ENCODE measurements at regions of chrX and their contacts with region 1.

Region 1: DNA sequence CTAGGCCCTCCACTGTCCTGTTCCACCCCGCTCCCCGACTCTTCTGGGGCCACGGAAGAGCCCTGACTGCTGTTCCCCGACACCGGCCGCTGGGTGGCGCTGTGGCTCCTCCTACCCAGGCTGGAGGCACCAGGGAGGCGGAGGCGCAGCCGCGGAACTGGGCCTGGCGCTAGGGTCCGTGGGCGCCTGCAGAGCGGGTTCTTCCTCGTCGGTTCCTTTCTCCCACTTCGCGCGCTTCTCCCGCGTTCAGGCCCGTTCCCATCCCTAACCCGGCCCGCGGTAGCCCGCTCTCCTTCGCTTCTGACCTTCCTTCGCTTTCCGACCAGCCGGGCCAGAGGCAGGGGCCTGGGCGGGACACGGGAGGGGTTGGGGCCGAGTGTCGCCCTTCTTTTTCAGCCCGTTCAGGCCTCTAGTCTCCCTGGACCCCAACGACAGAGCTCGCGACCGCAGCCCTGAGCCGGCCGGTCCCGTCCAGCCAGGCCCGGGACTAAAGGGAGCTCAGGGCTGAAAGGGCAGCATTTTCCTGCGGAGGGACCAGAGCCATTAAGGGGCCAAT is 34.3 kb downstream of the NALF2 start:
- DNase-seq: peak; percentile 51 to 62 (median 56)
- H3K4me3 ChIP-seq: no peak overlapping the region
- H3K4me3 Mint-ChIP-seq: peak overlapping the region in 6 of 8 donors; percentile 6 to 74 (median 58)
- H3K27ac ChIP-seq: no peak overlapping the region
- H3K27ac Mint-ChIP-seq: peak overlapping the region in 1 of 7 donors; percentile 59
- H3K4me1 ChIP-seq: peaks cover 14% of the 10 kb centered on the region
- H3K4me1 Mint-ChIP-seq: peaks cover 7 to 13% (median 10%) of the 10 kb centered on the region in 4 donors
- H3K27me3 ChIP-seq: no peaks in the 10 kb centered on the region
- H3K27me3 Mint-ChIP-seq: peaks cover 0 to 3% of the 10 kb centered on the region in 2 donors

Region 2: GRCh38 chrX:69615779-69616456 is 77.5 kb after region 1 on chrX and contains the start of gene EDA:
- CTCF ChIA-PET with region 1: interaction called, 14 read pairs
- POLR2A ChIA-PET with region 1: no interaction called
- intact Hi-C with region 1: loop called (anchors 2 kb)
- DNase-seq: peak; percentile 63 to 74 (median 67)
- H3K4me3 ChIP-seq: peak within 1 kb of the TSS in 1 of 2 donors; percentile 35
- H3K4me3 Mint-ChIP-seq: peak within 1 kb of the TSS; percentile 84 to 91 (median 86)
- H3K27ac ChIP-seq: peak within 1 kb of the TSS; percentile 4
- H3K27ac Mint-ChIP-seq: peak within 1 kb of the TSS in 1 of 7 donors; percentile 66
- H3K4me1 ChIP-seq: peaks cover 4% of the 10 kb centered on the region
- H3K4me1 Mint-ChIP-seq: peaks cover 7 to 16% (median 12%) of the 10 kb centered on the region in 4 donors
- H3K27me3 ChIP-seq: no peaks in the 10 kb centered on the region
- H3K27me3 Mint-ChIP-seq: peaks cover 0 to 5% of the 10 kb centered on the region in 2 donors
- total RNA-seq, gene EDA: 2.8 to 4.0 TPM

Region 3: DNA sequence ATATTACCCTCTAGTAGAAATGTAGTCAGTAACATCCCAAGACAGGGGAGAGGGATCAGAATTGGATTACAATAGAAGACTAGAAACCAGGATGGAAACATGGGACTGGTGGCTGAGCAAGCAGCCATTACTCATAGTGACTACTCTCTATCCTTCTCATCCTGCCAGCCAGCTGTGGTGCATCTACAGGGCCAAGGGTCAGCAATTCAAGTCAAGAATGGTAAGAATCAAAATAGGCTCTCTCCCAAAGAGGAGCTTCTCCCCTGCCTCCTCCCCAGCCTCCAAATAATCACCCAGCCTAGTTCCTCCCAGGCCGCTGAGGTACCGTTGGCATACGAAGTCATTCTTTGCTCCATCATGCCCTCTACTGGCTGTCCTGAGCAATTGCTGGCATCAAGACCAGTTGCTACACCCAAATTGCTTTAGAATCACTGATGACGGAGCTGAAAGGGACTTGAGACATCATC is 491.9 kb after region 1 on chrX:
- CTCF ChIA-PET with region 1: interaction called, 17 read pairs
- POLR2A ChIA-PET with region 1: no interaction called
- intact Hi-C with region 1: no loop called
- DNase-seq: peak; percentile 31 to 54 (median 51)
- H3K4me3 ChIP-seq: no peak overlapping the region
- H3K4me3 Mint-ChIP-seq: peak overlapping the region in 2 of 8 donors; percentile 9 to 11
- H3K27ac ChIP-seq: no peak overlapping the region
- H3K27ac Mint-ChIP-seq: peak overlapping the region in 3 of 7 donors; percentile 6 to 25 (median 12)
- H3K4me1 ChIP-seq: peaks cover 27% of the 10 kb centered on the region
- H3K4me1 Mint-ChIP-seq: peaks cover 10 to 42% (median 23%) of the 10 kb centered on the region in 4 donors
- H3K27me3 ChIP-seq: no peaks in the 10 kb centered on the region
- H3K27me3 Mint-ChIP-seq: no peaks in the 10 kb centered on the region

Region 4: GRCh38 chrX:70096052-70096451 is 557.7 kb after region 1 on chrX:
- CTCF ChIA-PET with region 1: interaction called, 17 read pairs
- POLR2A ChIA-PET with region 1: no interaction called
- intact Hi-C with region 1: loop called (anchors 2 kb)
- DNase-seq: no peak
- H3K4me3 ChIP-seq: no peak overlapping the region
- H3K4me3 Mint-ChIP-seq: no peak overlapping the region
- H3K27ac ChIP-seq: no peak overlapping the region
- H3K27ac Mint-ChIP-seq: no peak overlapping the region
- H3K4me1 ChIP-seq: no peaks in the 10 kb centered on the region
- H3K4me1 Mint-ChIP-seq: no peaks in the 10 kb centered on the region
- H3K27me3 ChIP-seq: no peaks in the 10 kb centered on the region
- H3K27me3 Mint-ChIP-seq: peaks cover 2 to 5% of the 10 kb centered on the region in 2 donors

Measured in CD4-positive, alpha-beta memory T cell (primary cell).